ENCODE measurements at regions of chr5 and their contacts with region 1.

Region 1: GRCh38 chr5:140244525-140245025 is 58.3 kb downstream of the PFDN1 start:
- DNase-seq: peak; percentile 96
- ATAC-seq: peak; percentile 50

Region 2: DNA sequence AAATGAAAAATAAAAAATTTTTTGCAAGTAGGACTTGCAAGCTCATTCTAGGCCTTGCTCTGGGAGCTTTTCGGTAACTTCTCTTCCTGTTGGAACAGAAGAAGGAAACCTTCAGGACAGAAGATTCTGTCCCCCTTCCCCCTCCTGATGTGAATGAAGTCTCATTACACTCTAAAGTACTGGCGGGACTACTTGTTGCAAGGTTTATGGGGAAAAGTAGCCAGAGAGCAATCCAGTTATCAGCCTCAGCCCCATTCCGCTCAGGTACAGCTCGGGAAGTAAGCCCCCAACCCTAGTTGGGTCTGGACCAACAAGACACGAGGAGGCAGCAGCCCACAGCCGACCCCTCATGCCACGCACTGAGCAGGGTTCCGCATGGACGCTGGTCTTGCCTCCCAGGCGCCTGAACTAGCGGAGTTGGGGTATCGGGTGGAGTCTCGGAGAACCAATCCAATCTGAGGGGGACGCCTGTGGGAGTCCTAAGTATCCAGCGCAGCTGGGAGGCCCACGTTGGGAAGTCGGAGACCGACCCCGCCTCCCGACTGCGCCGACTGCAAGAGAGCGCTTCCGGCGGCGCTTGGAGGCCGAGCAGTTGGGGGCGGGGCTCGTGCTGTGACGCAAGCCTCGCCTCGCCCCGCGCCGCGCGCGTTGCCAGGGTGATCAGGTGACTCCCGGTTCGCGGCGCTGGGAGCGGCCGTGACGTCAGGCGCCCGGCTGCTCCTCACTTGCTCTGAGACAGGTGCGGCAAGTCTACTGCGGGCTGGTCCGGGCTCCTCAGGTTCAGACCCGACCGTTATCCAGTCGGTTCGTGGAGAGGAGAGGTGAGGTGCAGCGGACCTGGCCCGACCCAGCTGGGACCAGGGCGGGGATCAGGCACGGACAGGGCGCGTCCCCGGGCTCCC is 69.9 kb before region 1 on chr5 and contains the start of gene CYSTM1:
- intact Hi-C with region 1: loop called (anchors 2 kb)
- DNase-seq: peak; percentile 99
- ATAC-seq: peak; percentile 96
- total RNA-seq, gene CYSTM1: 67.0 TPM

Region 3: GRCh38 chr5:140302786-140303639 is 58.4 kb after region 1 on chr5 and contains the start of gene PFDN1:
- intact Hi-C with region 1: loop called (anchors 5 kb)
- DNase-seq: peak; percentile 97
- ATAC-seq: peak; percentile 99
- total RNA-seq, gene PFDN1: 80.6 TPM

Region 4: DNA sequence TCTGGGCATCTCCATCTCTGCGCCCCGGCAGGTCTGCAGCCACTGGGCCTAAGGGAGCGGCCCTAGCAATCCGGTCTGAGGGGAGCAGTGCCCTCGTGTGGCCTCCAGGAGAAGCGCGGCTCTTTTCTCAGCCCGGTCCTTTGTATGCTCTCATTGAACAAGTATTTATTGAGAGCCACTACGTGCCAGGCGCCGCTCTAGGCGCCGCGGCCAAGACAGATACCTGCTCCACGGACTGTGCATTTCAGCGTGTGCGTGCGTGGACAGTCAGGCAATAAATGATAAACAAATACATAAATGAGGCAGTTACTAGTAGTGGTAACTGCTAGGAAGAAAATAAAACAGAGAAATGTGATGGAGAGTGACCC is 113.1 kb after region 1 on chr5:
- intact Hi-C with region 1: no loop called
- DNase-seq: peak; percentile 92
- ATAC-seq: peak; percentile 93